ENCODE measurements at regions of chr7 and their contacts with region 1.

Region 1: GRCh38 chr7:16055263-16055976 is 365.9 kb downstream of the CRPPA start:
- DNase-seq: no peak
- ATAC-seq: no peak
- H3K4me3 ChIP-seq: no peak overlapping the region
- H3K4me3 Mint-ChIP-seq: no peak overlapping the region
- H3K27ac ChIP-seq: no peak overlapping the region
- H3K27ac Mint-ChIP-seq: no peak overlapping the region
- H3K4me1 ChIP-seq: no peaks in the 10 kb centered on the region
- H3K4me1 Mint-ChIP-seq: no peaks in the 10 kb centered on the region
- H3K27me3 ChIP-seq: no peaks in the 10 kb centered on the region
- H3K27me3 Mint-ChIP-seq: no peaks in the 10 kb centered on the region
- CTCF ChIP-seq: no peak

Region 2: GRCh38 chr7:15998617-15999016 is 56.8 kb before region 1 on chr7:
- CTCF ChIA-PET with region 1: no interaction called
- POLR2A ChIA-PET with region 1: no interaction called
- intact Hi-C with region 1: loop called (anchors 10 kb)
- DNase-seq: no peak
- ATAC-seq: no peak
- H3K4me3 ChIP-seq: no peak overlapping the region
- H3K4me3 Mint-ChIP-seq: no peak overlapping the region
- H3K27ac ChIP-seq: no peak overlapping the region
- H3K27ac Mint-ChIP-seq: no peak overlapping the region
- H3K4me1 ChIP-seq: no peaks in the 10 kb centered on the region
- H3K4me1 Mint-ChIP-seq: no peaks in the 10 kb centered on the region
- H3K27me3 ChIP-seq: no peaks in the 10 kb centered on the region
- H3K27me3 Mint-ChIP-seq: no peaks in the 10 kb centered on the region
- CTCF ChIP-seq: no peak